CD4-positive, alpha-beta memory T cell (primary cell): ENCODE measurements at regions of chr17 and their contacts with region 1.

Region 1: GRCh38 chr17:42517516-42517915 is 18.5 kb upstream of the NAGLU start:
- DNase-seq: peak; percentile 73 to 79 (median 76)
- H3K4me3 ChIP-seq: no peak overlapping the region
- H3K4me3 Mint-ChIP-seq: no peak overlapping the region
- H3K27ac ChIP-seq: no peak overlapping the region
- H3K27ac Mint-ChIP-seq: peak overlapping the region in 1 of 7 donors; percentile 37
- H3K4me1 ChIP-seq: peaks cover 7% of the 10 kb centered on the region
- H3K4me1 Mint-ChIP-seq: peaks cover 0 to 8% (median 3%) of the 10 kb centered on the region in 4 donors
- H3K27me3 ChIP-seq: no peaks in the 10 kb centered on the region
- H3K27me3 Mint-ChIP-seq: no peaks in the 10 kb centered on the region

Region 2: DNA sequence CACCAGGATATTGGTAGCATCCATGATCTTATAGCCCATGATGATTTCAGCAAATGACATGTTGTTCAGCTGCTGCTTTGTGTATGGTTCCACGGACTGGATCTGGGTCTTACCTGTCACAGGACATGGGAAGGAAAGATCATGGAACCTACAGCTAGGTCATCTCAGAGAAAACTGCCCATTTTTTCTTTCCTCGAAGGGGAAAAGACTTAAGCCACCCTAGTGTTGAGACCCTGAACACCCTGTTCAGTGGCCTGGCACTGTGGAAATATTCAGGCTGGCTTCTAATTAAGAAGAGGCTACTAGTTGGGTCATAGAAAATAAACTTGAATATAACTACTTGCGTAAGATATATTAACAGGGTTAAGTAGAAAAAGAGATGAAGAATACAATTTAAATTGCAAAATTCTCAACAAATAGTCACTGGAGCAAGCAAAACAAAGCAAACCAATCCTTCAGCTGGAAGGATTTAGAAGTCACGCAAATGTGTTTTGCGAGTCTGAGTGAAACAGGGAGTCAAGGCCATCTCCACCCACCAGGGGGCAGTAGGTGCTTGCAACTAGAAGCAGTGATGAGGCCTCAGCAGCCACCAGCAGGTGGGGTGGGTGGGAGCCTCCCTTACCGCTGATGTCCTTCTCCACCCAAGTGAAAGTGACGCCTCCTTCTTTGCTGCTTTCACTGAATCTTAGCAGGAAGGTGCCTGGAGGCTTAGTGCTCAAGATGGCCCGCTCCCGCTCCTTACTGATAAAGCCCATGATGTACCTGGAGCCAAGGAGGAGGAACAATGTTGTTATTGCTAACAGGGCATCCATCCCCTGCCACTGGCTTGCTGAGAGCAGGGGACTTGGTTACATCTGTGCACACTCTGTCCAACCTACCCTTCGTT is 194.9 kb before region 1 on chr17:
- CTCF ChIA-PET with region 1: interaction called, 7 read pairs
- POLR2A ChIA-PET with region 1: no interaction called
- intact Hi-C with region 1: loop called (anchors 1 kb)
- DNase-seq: peak; percentile 91 to 95 (median 91)
- H3K4me3 ChIP-seq: no peak overlapping the region
- H3K4me3 Mint-ChIP-seq: peak overlapping the region in 1 of 8 donors; percentile 6
- H3K27ac ChIP-seq: no peak overlapping the region
- H3K27ac Mint-ChIP-seq: peak overlapping the region; percentile 68 to 94 (median 81)
- H3K4me1 ChIP-seq: peaks cover 24% of the 10 kb centered on the region
- H3K4me1 Mint-ChIP-seq: peaks cover 18 to 44% (median 29%) of the 10 kb centered on the region in 4 donors
- H3K27me3 ChIP-seq: no peaks in the 10 kb centered on the region
- H3K27me3 Mint-ChIP-seq: no peaks in the 10 kb centered on the region

Region 3: DNA sequence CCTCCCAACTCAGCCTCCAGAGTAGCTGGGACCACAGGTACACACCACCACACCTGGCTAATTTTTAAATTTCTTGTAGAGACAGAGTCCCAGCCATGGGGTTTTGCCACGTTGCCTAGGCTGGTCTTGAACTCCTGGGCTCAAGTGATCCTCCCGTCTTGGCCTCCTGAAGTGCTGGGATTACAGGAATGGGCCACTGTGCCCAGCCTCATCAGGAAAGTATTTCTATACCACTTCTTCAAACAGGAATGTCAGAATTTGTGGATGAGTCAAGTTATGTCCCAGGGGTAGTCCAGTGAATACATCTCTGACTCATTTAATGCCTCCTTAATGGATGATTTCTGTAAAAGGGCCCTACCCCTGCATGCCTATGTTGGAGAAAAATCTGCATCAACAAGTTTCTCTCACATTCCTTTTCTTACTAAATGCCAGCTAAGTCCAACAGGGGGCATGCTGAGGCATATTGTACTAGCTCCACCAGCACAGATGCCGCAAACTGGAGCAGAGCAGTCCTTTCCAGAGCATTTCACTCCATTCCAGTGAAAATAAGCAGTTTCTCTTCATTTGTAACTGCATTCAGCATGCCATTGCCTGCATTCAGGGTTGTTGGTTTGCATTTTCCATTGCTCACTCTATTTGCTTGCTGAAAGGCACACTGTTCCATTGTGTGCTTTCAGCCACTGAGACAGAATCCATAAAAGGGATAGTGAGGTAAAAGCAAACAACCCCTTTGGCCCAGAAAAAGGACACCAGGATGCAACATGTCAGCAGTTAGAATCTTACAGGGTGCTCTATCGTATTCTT is 89.2 kb before region 1 on chr17:
- CTCF ChIA-PET with region 1: interaction called, 86 read pairs
- POLR2A ChIA-PET with region 1: interaction called, 3 read pairs
- intact Hi-C with region 1: loop called (anchors 1 kb)
- DNase-seq: peak in 4 of 5 donors; percentile 49 to 58 (median 52)
- H3K4me3 ChIP-seq: no peak overlapping the region
- H3K4me3 Mint-ChIP-seq: no peak overlapping the region
- H3K27ac ChIP-seq: no peak overlapping the region
- H3K27ac Mint-ChIP-seq: no peak overlapping the region
- H3K4me1 ChIP-seq: peaks cover 6% of the 10 kb centered on the region
- H3K4me1 Mint-ChIP-seq: peaks cover 0 to 4% (median 1%) of the 10 kb centered on the region in 4 donors
- H3K27me3 ChIP-seq: peaks cover 6% of the 10 kb centered on the region
- H3K27me3 Mint-ChIP-seq: peaks cover 6 to 19% of the 10 kb centered on the region in 2 donors

Region 4: DNA sequence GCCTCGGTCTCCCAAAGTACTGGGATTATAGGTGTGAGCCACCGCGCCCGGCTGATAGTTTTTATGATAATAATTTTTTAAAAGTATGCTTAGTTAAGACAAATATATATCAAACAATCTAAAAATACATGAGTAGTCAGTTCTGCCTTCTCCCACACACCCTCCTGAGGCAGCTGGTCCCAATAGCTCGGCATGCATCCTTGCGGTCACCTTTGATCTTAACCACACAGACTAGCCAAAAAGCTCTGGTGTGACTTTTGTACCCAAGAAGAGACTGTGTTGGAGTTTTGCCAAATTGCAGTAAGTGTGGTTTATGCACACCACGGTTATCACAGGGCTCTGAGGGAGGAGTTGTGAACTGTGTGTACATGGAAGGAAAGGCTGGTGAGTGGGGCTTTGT is 33.2 kb before region 1 on chr17:
- CTCF ChIA-PET with region 1: interaction called, 4 read pairs
- POLR2A ChIA-PET with region 1: no interaction called
- intact Hi-C with region 1: loop called (anchors 5 kb)
- DNase-seq: peak; percentile 87 to 92 (median 88)
- H3K4me3 ChIP-seq: peak overlapping the region in 1 of 2 donors; percentile 5
- H3K4me3 Mint-ChIP-seq: peak overlapping the region; percentile 10 to 77 (median 71)
- H3K27ac ChIP-seq: no peak overlapping the region
- H3K27ac Mint-ChIP-seq: peak overlapping the region in 6 of 7 donors; percentile 5 to 93 (median 70)
- H3K4me1 ChIP-seq: peaks cover 30% of the 10 kb centered on the region
- H3K4me1 Mint-ChIP-seq: peaks cover 19 to 41% (median 30%) of the 10 kb centered on the region in 4 donors
- H3K27me3 ChIP-seq: no peaks in the 10 kb centered on the region
- H3K27me3 Mint-ChIP-seq: peaks cover 0 to 1% of the 10 kb centered on the region in 2 donors

Region 5: DNA sequence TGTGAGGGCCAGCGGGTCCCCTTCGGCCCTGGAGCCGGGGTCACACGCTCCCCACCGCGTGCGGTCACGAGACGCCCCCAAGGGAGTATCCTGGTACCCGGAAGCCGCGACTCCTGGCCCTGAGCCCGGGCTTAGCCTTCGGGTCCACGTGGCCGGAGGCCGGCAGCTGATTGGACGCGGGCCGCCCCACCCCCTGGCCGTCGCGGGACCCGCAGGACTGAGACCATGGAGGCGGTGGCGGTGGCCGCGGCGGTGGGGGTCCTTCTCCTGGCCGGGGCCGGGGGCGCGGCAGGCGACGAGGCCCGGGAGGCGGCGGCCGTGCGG is 18.5 kb after region 1 on chr17 and contains the start of gene NAGLU:
- CTCF ChIA-PET with region 1: interaction called, 27 read pairs
- POLR2A ChIA-PET with region 1: interaction called, 4 read pairs
- intact Hi-C with region 1: no loop called
- DNase-seq: peak; percentile 67 to 76 (median 70)
- H3K4me3 ChIP-seq: peak within 1 kb of the TSS; percentile 43 to 57
- H3K4me3 Mint-ChIP-seq: peak within 1 kb of the TSS; percentile 82 to 93 (median 84)
- H3K27ac ChIP-seq: peak within 1 kb of the TSS; percentile 46
- H3K27ac Mint-ChIP-seq: peak within 1 kb of the TSS; percentile 55 to 84 (median 82)
- H3K4me1 ChIP-seq: peaks cover 33% of the 10 kb centered on the region
- H3K4me1 Mint-ChIP-seq: peaks cover 23 to 55% (median 37%) of the 10 kb centered on the region in 4 donors
- H3K27me3 ChIP-seq: no peaks in the 10 kb centered on the region
- H3K27me3 Mint-ChIP-seq: no peaks in the 10 kb centered on the region
- total RNA-seq, gene NAGLU: 20.6 to 22.8 TPM